Activated naive CD4-positive, alpha-beta T cell treated with anti-CD3 and anti-CD28 coated beads for 36 hours (primary cell): ENCODE measurements at regions of chr3 and their contacts with region 1.

Region 1: DNA sequence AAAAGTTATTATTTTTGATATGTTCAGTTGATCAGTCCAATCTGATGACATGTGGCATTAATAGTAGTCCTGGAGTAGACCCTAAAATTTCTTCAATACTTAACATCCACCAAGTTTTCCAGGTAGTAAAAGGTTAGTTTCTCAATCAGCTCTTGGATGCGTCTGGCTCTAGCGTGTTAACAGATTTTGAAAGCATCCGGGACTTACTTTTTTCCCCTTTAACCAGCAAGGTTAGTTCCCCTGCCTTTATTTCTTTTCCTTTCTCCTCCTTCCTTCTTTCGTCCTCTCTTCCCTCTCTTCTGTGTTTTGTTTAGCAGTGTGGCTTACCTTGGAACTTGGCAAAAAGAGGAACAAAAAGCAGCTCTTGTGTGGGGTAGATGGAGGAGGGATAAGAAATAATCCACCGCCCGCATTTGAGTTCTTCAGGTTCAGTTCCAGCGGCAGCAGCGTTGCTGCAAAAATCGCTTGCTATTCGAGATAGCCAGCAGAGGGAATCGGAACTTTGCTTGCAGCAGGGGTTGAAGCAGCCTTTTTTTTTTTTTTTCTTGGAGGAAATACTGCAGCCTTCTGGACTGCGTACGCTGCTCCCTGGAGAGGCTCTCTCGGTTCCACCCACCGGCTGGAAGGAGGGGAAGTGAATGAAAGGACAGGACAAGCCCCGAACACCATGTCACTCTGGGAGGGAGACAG is at the start of gene RBMS3:
- DNase-seq: peak; percentile 24
- H3K4me3 Mint-ChIP-seq: peak within 1 kb of the TSS; percentile 62
- H3K27ac Mint-ChIP-seq: peak within 1 kb of the TSS; percentile 64
- H3K4me1 Mint-ChIP-seq: peaks cover 34% of the 10 kb centered on the region
- H3K27me3 Mint-ChIP-seq: peaks cover 18% of the 10 kb centered on the region
- total RNA-seq, gene RBMS3: 0.84 to 1.1 TPM

Region 2: GRCh38 chr3:28916713-28917499 is 363.6 kb before region 1 on chr3:
- CTCF ChIA-PET with region 1: no interaction called
- intact Hi-C with region 1: loop called (anchors 5 kb)
- DNase-seq: peak; percentile 16
- H3K4me3 Mint-ChIP-seq: no peak overlapping the region
- H3K27ac Mint-ChIP-seq: no peak overlapping the region
- H3K4me1 Mint-ChIP-seq: peaks cover 6% of the 10 kb centered on the region
- H3K27me3 Mint-ChIP-seq: peaks cover 5% of the 10 kb centered on the region

Region 3: GRCh38 chr3:29026286-29026685 is 254.3 kb before region 1 on chr3:
- CTCF ChIA-PET with region 1: no interaction called
- intact Hi-C with region 1: loop called (anchors 2 kb)
- DNase-seq: no peak
- H3K4me3 Mint-ChIP-seq: no peak overlapping the region
- H3K27ac Mint-ChIP-seq: no peak overlapping the region
- H3K4me1 Mint-ChIP-seq: no peaks in the 10 kb centered on the region
- H3K27me3 Mint-ChIP-seq: no peaks in the 10 kb centered on the region

Region 4: DNA sequence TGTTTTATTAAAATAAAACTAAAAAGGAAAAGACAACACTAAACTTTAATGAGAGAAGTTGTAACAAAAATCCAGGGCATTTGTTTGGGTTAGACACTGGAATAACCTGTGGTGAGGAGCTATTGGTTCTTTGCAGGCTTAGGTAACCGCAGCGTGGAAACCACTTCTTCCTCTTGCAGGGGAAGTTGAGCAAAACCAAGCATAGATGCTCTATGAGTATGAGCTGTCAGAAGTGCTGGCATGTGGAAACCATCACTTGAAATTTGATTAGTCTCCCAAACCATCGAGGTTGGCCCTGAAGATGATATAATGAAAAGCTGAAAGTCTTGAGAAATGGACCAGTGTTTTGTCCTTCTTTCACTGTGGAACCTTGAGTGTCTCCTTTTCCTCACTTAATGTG is 126.7 kb before region 1 on chr3:
- CTCF ChIA-PET with region 1: no interaction called
- intact Hi-C with region 1: loop called (anchors 5 kb)
- DNase-seq: peak; percentile 67
- H3K4me3 Mint-ChIP-seq: no peak overlapping the region
- H3K27ac Mint-ChIP-seq: no peak overlapping the region
- H3K4me1 Mint-ChIP-seq: peaks cover 9% of the 10 kb centered on the region
- H3K27me3 Mint-ChIP-seq: no peaks in the 10 kb centered on the region

Region 5: DNA sequence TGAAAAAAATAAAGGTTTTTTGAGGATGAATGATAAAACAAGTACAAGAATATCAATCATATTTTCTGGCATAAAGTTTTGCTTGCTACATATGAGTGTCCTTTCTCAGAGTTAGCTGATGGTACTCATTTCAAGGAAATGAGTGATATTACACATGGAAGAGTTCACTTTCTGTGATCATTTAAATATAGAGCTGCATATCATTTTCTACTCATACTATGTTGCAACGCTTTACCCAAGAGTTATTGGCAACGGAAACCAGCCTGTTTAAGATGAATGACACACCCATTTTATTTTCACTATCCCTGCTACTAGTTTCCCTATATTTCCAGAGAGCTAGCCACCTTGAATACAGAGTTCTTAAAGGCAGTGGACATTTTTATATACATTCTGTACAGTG is 35.1 kb before region 1 on chr3:
- CTCF ChIA-PET with region 1: no interaction called
- intact Hi-C with region 1: loop called (anchors 1 kb)
- DNase-seq: no peak
- H3K4me3 Mint-ChIP-seq: no peak overlapping the region
- H3K27ac Mint-ChIP-seq: no peak overlapping the region
- H3K4me1 Mint-ChIP-seq: no peaks in the 10 kb centered on the region
- H3K27me3 Mint-ChIP-seq: no peaks in the 10 kb centered on the region

Region 6: GRCh38 chr3:29693863-29694262 is 413.3 kb after region 1 on chr3:
- CTCF ChIA-PET with region 1: no interaction called
- intact Hi-C with region 1: no loop called
- DNase-seq: no peak
- H3K4me3 Mint-ChIP-seq: no peak overlapping the region
- H3K27ac Mint-ChIP-seq: no peak overlapping the region
- H3K4me1 Mint-ChIP-seq: no peaks in the 10 kb centered on the region
- H3K27me3 Mint-ChIP-seq: peaks cover 4% of the 10 kb centered on the region

Region 7: DNA sequence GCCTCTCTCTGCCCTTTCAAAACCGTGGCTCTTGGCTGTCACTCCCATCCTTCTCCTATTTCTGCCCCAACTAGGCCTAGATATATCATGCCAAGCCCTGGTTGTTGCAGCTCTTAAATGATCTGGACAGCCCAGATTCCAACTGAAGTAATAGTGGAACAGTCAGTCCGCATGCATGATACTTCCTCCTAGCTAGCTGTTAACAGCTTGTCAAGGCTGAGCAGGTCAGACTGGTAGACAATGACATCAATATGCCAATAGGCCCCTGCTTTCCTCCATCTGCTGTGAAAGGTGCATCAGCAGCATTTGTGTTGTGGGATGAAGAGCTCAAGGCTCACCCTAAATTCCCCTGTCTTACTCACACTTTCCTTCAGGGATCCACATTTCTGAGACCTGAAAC is 798.2 kb after region 1 on chr3:
- CTCF ChIA-PET with region 1: no interaction called
- intact Hi-C with region 1: no loop called
- DNase-seq: no peak
- H3K4me3 Mint-ChIP-seq: no peak overlapping the region
- H3K27ac Mint-ChIP-seq: no peak overlapping the region
- H3K4me1 Mint-ChIP-seq: no peaks in the 10 kb centered on the region
- H3K27me3 Mint-ChIP-seq: peaks cover 4% of the 10 kb centered on the region